Activated CD4-positive, alpha-beta memory T cell treated with anti-CD3 and anti-CD28 coated beads, Interleukin-2, amount 10 ng/mL, durations not matched to agents 7 days and 5 days (primary cell): ENCODE measurements at regions of chr5 and their contacts with region 1.

Region 1: DNA sequence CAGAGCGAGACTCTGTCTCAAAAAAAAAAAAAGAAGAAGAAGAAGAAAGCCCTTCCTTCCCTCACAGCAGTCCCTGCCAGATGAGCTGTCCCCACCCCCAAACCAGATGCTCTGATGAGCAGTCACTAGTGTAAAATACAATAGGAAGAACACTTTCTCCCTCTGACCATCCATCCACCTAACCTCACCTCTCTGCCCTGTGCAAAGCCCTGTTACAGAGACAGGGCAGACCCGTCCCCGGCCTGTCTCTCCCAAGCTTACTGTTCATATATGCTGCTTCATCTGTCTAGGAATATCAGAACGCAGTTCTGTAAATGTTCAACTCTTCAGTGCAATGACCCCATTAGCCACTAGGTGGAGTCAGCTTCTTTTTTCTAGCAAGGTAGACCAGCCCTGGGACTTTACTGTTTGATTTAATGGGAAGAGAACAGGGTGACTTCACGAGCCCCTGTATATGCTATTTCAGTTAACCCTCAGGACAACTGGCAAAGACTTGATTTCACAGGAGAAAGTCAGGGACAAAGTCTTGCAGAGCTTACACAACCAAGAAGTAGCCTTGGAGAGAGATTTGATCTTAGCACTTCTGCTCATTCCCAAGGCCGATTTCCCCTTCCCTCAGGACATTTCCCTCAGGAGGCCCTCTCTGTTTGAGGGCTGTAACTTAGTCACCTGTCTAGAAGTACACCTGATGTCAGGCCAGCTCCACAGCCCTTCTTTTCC is 14.9 kb upstream of the FGFR4 start:
- DNase-seq: peak; percentile 66
- H3K4me3 Mint-ChIP-seq: no peak overlapping the region
- H3K27ac Mint-ChIP-seq: no peak overlapping the region
- H3K4me1 Mint-ChIP-seq: peaks cover 3% of the 10 kb centered on the region
- H3K27me3 Mint-ChIP-seq: no peaks in the 10 kb centered on the region

Region 2: GRCh38 chr5:176784218-176785165 is 287.3 kb before region 1 on chr5:
- CTCF ChIA-PET with region 1: no interaction called
- POLR2A ChIA-PET with region 1: no interaction called
- DNase-seq: no peak
- H3K4me3 Mint-ChIP-seq: no peak overlapping the region
- H3K27ac Mint-ChIP-seq: no peak overlapping the region
- H3K4me1 Mint-ChIP-seq: peaks cover 12% of the 10 kb centered on the region
- H3K27me3 Mint-ChIP-seq: peaks cover 32% of the 10 kb centered on the region

Region 3: GRCh38 chr5:177035976-177036375 is 35.9 kb before region 1 on chr5:
- CTCF ChIA-PET with region 1: interaction called, 10 read pairs
- POLR2A ChIA-PET with region 1: no interaction called
- DNase-seq: no peak
- H3K4me3 Mint-ChIP-seq: no peak overlapping the region
- H3K27ac Mint-ChIP-seq: no peak overlapping the region
- H3K4me1 Mint-ChIP-seq: peaks cover 12% of the 10 kb centered on the region
- H3K27me3 Mint-ChIP-seq: no peaks in the 10 kb centered on the region

Region 4: DNA sequence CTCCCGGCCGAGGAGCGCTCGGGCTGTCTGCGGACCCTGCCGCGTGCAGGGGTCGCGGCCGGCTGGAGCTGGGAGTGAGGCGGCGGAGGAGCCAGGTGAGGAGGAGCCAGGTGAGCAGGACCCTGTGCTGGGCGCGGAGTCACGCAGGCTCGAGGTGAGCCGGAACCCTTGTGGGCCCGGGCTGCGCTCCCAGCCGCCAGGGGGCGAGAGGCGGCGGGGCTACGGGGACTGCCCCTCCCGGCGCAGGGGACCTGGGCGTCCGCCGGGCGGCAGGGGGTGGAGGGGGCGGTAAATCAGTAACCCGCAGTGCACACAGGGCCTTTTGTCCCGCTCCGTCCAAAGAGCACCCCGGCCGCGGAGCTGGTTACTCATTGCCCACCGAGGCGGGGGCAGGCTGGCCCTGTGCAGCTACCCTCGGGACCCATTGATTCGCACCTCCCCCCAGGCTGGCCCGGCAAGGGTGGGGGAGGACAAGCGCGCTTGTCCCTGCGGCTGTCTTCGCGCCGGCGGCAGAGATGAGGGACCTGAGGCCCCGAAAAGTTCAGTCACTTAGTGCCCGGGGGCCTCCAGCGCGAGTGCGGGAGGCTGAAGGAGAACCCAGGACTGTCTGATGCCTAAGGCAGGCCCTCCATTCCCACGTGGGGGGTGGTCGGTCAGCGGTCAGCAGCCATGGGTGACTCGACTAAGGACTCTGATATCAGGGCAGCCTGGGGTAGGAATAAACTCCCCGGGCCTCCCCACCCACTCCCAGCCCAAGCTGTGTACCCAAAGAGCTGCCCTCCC is 15.3 kb after region 1 on chr5:
- CTCF ChIA-PET with region 1: interaction called, 53 read pairs
- POLR2A ChIA-PET with region 1: interaction called, 3 read pairs
- DNase-seq: peak; percentile 59
- H3K4me3 Mint-ChIP-seq: no peak overlapping the region
- H3K27ac Mint-ChIP-seq: no peak overlapping the region
- H3K4me1 Mint-ChIP-seq: peaks cover 12% of the 10 kb centered on the region
- H3K27me3 Mint-ChIP-seq: peaks cover 51% of the 10 kb centered on the region

Region 5: DNA sequence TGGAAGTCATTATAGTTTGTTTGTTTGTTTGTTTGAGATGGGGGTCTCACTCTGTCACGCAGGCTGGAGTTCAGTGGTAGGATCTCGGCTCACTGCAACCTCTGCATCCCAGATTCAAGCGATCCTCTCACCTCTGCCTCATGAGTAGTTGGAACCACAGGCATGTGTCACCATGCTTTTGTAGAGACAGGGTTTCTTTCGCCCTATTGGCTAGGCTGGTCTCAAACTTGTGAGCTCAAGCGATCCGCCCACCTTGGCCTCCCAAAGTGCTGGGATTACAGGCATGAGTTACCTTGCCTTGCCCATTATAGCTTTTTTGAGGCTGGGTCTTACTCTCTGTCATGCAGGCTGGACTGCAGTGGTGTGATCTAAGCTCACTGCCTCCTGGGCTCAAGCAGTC is 90.6 kb after region 1 on chr5:
- CTCF ChIA-PET with region 1: no interaction called
- POLR2A ChIA-PET with region 1: no interaction called
- DNase-seq: no peak
- H3K4me3 Mint-ChIP-seq: no peak overlapping the region
- H3K27ac Mint-ChIP-seq: no peak overlapping the region
- H3K4me1 Mint-ChIP-seq: peaks cover 5% of the 10 kb centered on the region
- H3K27me3 Mint-ChIP-seq: no peaks in the 10 kb centered on the region